Thyroid gland (tissue), 4 donors: ENCODE measurements at regions of chr12 and their contacts with region 1.

Region 1: GRCh38 chr12:50055831-50056638 is 1.4 kb upstream of the ASIC1 start:
- DNase-seq: peak; percentile 33 to 37
- H3K4me3 ChIP-seq: no peak overlapping the region
- H3K27ac ChIP-seq: no peak overlapping the region
- H3K4me1 ChIP-seq: peaks cover 6 to 21% of the 10 kb centered on the region in 2 donors
- H3K27me3 ChIP-seq: no peaks in the 10 kb centered on the region
- CTCF ChIP-seq: peak; percentile 78 to 95 (median 82)
- POLR2A ChIP-seq: no peak

Region 2: DNA sequence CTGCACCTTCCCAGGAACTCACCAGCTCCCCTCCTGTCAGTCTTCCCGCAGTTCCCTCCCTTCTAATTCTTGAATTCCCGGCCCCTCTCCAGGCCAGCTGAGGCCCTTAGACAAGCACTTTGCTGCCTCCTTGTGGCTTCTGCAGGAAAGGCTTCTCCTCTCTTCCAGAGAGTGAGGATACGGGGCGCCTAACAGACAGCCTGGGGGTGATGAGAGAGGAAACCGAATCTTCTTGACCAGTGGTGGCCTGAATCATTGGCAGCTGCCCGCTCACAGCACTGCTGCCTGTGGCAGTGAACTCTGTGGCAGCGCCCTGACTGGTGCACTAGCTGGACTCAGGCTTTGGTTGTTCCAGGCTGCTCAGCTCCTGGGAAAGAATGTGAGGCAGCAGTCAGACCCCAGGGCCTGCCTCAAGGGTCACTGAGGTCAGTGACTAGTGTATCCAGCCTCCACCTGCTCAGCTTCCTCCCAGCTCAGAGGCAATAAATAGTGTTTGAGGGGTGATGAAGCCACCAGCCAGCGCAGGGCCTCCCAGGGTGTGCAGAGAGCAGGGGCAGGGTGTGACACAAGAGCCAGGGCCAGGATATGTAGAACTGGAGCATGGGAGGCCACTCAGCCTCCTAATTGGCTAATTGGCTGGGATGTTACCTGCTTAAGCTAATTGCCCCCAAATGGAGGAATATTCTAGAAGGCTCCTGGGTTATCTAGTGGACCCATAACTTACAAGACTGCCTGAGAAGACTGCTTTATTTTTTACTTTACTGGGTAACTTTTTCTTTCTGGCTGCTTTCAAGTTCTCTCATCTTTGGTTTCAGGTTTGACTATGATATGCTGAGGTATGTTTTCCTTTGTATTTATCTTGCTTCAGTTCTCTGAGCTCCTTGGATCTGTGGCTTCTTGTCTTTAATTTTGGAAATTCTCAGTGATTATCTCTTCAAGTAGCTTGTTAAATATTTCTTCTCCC is 475.2 kb before region 1 on chr12:
- intact Hi-C with region 1: no loop called
- DNase-seq: peak; percentile 90 to 92
- H3K4me3 ChIP-seq: no peak overlapping the region
- H3K27ac ChIP-seq: no peak overlapping the region
- H3K4me1 ChIP-seq: peaks cover 13 to 22% of the 10 kb centered on the region in 2 donors
- H3K27me3 ChIP-seq: no peaks in the 10 kb centered on the region
- CTCF ChIP-seq: peak; percentile 25 to 93 (median 85)
- POLR2A ChIP-seq: no peak

Region 3: GRCh38 chr12:49866859-49867579 is 189.0 kb before region 1 on chr12:
- intact Hi-C with region 1: loop called (anchors 10 kb)
- DNase-seq: peak; percentile 79 to 85
- H3K4me3 ChIP-seq: no peak overlapping the region
- H3K27ac ChIP-seq: no peak overlapping the region
- H3K4me1 ChIP-seq: peaks cover 28 to 57% of the 10 kb centered on the region in 2 donors
- H3K27me3 ChIP-seq: no peaks in the 10 kb centered on the region
- CTCF ChIP-seq: peak; percentile 82 to 100 (median 92)
- POLR2A ChIP-seq: no peak

Region 4: DNA sequence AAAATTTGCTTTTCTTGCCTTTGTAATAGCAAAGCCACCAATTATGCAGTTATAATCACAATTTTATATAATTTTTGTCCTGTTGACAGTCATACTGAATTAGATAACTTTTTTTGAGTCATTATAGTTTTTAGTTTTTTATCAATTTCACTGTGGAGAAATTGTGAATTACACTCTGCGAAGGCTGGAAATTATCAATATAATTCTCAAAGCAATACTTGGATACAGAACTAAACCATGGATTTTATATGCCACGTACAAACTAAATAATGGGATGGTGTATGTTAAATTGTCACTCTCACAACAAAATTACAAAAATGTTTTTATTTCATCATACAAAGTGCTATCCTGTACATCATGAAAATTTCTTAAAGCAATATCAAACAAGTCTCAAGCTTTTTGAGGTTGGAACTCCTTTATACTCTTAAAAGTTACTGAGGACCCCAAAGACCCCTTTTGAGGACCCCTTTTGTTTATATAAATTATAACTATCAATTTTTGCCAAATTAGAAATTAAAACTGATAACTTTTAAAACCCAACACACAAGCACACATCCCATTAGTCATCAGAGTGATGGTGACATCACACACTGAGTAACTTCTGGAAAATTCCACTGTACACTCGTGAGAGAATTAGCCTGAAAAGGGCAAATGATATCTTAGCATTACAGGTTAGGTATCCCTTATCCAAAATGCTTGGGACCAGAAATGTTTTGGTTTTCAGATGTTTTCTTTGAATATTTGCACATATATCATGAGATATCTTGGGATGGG is 125.3 kb before region 1 on chr12:
- intact Hi-C with region 1: no loop called
- DNase-seq: no peak
- H3K4me3 ChIP-seq: no peak overlapping the region
- H3K27ac ChIP-seq: no peak overlapping the region
- H3K4me1 ChIP-seq: no peaks in the 10 kb centered on the region
- H3K27me3 ChIP-seq: no peaks in the 10 kb centered on the region
- CTCF ChIP-seq: no peak
- POLR2A ChIP-seq: no peak

Region 5: DNA sequence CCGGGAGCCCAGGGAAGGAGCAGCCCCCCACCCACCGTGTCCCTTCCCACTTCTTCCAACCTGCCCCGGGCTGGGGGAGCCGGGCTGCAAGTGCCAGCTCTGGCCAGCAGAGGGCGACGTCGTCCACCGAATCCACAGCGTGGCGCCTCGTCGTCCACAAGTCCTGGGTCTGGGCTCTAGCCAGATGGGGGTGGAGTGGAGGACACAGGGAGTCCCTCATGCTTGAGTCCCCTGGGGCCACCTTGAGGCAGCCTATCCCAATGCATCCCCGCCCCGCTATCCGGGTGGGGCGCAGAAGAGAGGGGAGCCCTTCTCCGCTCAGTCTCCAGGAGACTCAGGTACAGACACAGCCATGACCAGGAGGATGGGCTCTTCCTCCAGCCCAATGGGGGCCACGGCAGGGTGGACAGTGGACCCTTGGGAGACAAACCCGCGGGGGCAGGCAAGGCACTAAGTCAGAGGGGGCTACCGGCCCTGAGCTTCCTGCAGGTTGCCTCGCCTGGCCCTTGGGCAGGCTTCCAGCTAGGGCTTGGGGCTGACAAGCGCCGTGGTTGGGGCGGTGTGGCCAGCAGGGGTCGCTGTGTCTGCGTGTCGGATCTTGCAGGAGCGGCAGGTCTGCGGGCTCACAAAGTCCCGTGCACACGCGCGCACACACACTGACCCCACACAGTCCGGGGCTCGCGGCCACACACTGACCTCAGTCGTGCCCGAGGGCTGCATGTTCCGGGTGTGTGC is 88.8 kb before region 1 on chr12:
- intact Hi-C with region 1: loop called (anchors 5 kb)
- DNase-seq: peak; percentile 89 to 92
- H3K4me3 ChIP-seq: no peak overlapping the region
- H3K27ac ChIP-seq: no peak overlapping the region
- H3K4me1 ChIP-seq: peaks cover 16 to 31% of the 10 kb centered on the region in 2 donors
- H3K27me3 ChIP-seq: no peaks in the 10 kb centered on the region
- CTCF ChIP-seq: peak; percentile 73 to 91 (median 80)
- POLR2A ChIP-seq: no peak

Region 6: DNA sequence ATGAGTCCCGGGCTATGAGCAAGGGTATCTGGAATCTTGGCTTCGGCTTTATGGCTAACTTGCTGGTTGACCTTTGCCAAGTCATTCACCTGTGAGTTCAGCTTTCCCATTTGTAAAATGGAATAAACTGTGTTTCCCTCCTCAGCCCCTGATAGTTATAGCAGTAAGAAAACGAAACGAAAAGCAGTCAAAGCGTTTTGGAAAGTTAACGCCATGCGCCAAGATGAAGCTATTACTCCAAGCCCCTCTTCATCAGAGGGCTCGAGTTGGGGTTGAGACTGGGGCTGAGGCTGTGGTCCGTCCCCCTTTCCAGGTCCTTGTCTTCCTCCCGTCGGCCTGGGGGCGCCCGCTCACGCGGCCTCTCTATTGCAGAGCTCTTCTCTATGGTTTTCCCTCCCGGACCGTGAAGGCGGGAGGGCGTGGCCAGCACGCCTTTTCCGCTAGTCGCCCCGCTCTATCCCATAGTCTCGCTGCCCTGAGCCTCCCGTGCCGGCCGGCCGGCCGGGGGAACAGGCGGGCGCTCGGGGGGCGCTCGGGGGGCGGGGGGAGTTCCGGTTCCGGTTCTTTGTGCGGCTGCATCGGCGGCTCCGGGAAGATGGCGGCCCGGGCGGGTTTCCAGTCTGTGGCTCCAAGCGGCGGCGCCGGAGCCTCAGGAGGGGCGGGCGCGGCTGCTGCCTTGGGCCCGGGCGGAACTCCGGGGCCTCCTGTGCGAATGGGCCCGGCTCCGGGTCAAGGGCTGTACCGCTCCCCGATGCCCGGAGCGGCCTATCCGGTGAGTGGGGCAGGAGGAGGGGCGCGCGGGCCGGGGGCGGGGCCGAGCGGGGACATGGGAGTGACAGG is 29.0 kb after region 1 on chr12 and contains the start of gene SMARCD1:
- intact Hi-C with region 1: no loop called
- DNase-seq: peak; percentile 94 to 95
- H3K4me3 ChIP-seq: peak within 1 kb of the TSS; percentile 27 to 94 (median 89)
- H3K27ac ChIP-seq: peak within 1 kb of the TSS; percentile 87 to 98 (median 96)
- H3K4me1 ChIP-seq: peaks cover 7 to 16% of the 10 kb centered on the region in 2 donors
- H3K27me3 ChIP-seq: no peaks in the 10 kb centered on the region
- CTCF ChIP-seq: peak in 2 of 6 experiments; percentile 45 to 50
- POLR2A ChIP-seq: peak in 1 of 2 donors; percentile 42
- total RNA-seq, gene SMARCD1: 67.2 to 92.9 (median 74.7) TPM